ENCODE measurements at regions of chr1 and their contacts with region 1.

Region 1: DNA sequence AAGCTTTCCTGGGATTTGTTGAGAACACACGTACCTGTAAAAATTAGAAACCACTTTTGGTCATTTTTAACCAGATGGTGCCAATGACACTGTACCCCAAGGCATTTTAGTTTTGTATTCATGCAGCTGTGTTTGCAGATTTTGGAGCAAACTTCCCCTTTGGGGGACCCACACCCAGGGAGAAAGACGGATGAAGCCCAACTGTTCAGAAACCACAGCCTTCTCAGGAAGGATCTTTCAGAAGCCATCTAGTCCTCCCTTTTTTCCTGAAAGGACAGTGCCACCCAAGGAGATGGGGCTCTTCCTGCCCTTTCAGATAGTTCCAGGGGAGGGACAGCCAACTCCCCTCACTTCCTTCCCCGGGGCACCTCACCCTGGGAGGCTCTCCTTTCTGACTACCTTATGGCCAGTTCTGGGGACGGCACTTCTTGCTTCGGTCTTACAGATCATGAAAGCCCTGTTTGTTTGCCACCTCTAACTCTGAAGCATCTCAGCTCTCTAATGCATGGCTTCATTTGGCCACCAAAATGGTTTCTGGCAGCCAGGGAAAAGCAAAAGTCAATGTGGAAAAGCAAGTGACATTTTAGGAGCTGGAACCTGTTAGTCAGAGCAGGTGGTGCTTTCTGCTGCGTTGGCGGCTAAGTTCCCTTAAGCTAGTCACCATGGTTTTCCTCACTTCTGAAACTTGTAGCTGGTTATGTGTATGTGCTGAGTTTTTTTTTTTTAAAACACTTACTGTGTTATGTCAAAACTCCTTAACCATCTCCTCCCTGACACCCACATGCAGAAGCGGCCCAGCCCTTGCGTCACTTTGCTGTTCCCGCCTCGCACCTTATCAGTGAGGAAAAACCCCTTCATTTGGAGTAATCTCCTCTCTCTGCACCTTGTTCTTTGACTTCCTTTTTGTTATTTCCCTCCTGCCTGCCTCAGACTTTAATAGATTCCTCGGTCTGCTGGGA is 10.1 kb downstream of the TMCC2 start:
- DNase-seq: peak; percentile 68
- H3K4me3 Mint-ChIP-seq: peak overlapping the region; percentile 75
- H3K27ac Mint-ChIP-seq: peak overlapping the region; percentile 97
- H3K4me1 Mint-ChIP-seq: peaks cover 51% of the 10 kb centered on the region
- H3K27me3 Mint-ChIP-seq: no peaks in the 10 kb centered on the region

Region 2: GRCh38 chr1:205121660-205122488 is 115.9 kb before region 1 on chr1 and contains the start of gene RBBP5:
- intact Hi-C with region 1: loop called (anchors 2 kb)
- DNase-seq: peak; percentile 98
- H3K4me3 Mint-ChIP-seq: peak within 1 kb of the TSS; percentile 98
- H3K27ac Mint-ChIP-seq: peak within 1 kb of the TSS; percentile 98
- H3K4me1 Mint-ChIP-seq: peaks cover 34% of the 10 kb centered on the region
- H3K27me3 Mint-ChIP-seq: no peaks in the 10 kb centered on the region
- total RNA-seq, gene RBBP5: 24.0 and 27.2 TPM in 2 replicates

Region 3: DNA sequence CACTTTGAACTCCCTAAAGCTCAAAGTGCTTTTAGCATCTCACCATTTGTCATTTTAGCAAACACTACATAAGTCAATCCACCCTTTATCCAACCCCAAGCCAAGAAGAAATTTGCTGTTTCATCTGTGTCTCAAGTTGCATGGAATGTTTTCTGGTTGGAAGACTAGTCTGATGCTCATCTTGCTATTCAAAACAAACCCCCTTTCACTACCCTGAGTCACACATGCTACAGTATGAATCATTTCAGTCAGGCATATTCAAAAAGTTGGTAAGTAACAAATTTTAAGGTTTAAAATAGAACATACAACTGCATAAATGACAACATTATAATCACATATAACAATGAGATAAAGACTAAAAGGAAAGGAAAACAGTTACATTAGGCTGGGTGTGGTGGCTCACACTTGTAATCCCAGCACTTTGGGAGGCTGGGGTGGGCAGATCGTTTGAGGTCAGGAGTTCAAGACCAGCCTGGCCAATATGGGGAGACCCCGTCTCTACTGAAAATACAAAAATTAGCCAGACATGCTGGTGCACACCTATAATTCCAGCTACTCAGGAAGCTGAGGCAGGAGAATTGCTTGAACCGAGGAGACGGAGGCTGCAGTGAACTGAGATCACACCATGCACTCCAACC is 65.0 kb before region 1 on chr1:
- intact Hi-C with region 1: loop called (anchors 2 kb)
- DNase-seq: no peak
- H3K4me3 Mint-ChIP-seq: peak overlapping the region; percentile 54
- H3K27ac Mint-ChIP-seq: peak overlapping the region; percentile 79
- H3K4me1 Mint-ChIP-seq: peaks cover 17% of the 10 kb centered on the region
- H3K27me3 Mint-ChIP-seq: no peaks in the 10 kb centered on the region

Region 4: DNA sequence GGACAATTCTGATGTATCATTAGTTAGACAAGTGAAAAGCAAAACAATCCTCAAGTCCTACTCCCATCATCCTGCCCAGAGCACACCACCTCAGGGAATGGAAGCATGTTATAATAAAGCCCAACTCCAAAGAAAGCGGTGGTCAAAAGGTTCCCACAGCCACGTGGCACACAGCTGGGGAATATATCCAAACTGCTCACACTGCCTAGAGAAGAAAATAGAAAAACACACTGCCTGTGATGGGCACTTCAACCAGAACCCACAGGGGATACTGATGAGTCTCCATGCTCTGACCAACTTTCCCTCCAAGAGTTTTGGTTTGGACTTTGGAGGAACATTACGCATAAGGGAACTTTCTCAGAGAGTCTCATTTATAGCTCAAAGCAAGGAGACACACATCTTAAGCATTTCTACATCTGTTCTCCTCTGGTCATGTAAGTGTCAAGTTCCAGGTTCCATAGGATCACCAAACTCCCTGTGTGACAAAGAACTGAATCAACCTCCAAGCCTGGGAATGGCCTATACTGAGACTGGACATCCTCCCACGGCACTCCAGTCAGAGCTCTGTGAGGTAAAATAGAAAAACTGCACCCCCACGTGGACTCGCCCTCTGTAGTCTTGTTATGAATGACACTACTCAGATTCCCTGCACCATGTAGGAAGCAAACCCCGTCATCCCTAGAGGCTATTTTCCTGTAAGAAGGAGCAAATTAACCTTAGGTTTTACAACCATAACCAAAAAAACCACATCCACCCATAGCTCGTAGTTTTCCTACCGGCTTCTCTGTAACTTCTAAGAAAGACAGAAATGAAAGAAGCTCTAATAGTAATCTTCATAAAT is 38.5 kb before region 1 on chr1:
- intact Hi-C with region 1: loop called (anchors 1 kb)
- DNase-seq: peak; percentile 78
- H3K4me3 Mint-ChIP-seq: peak overlapping the region; percentile 66
- H3K27ac Mint-ChIP-seq: peak overlapping the region; percentile 85
- H3K4me1 Mint-ChIP-seq: peaks cover 50% of the 10 kb centered on the region
- H3K27me3 Mint-ChIP-seq: no peaks in the 10 kb centered on the region

Region 5: GRCh38 chr1:205211169-205211838 is 26.5 kb before region 1 on chr1 and contains the start of gene DSTYK:
- intact Hi-C with region 1: loop called (anchors 2 kb)
- DNase-seq: peak; percentile 97
- H3K4me3 Mint-ChIP-seq: peak within 1 kb of the TSS; percentile 95
- H3K27ac Mint-ChIP-seq: peak within 1 kb of the TSS; percentile 96
- H3K4me1 Mint-ChIP-seq: peaks cover 42% of the 10 kb centered on the region
- H3K27me3 Mint-ChIP-seq: no peaks in the 10 kb centered on the region
- total RNA-seq, gene DSTYK: 26.7 and 27.6 TPM in 2 replicates

Measured in activated CD4-positive, alpha-beta T cell treated with anti-CD3 and anti-CD28 coated beads, Interleukin-2, amount 10 ng/mL, durations not matched to agents 24 days and 14 days (primary cell).